Motor neuron (in vitro differentiated cells): ENCODE measurements at regions of chr2 and their contacts with region 1.

Region 1: DNA sequence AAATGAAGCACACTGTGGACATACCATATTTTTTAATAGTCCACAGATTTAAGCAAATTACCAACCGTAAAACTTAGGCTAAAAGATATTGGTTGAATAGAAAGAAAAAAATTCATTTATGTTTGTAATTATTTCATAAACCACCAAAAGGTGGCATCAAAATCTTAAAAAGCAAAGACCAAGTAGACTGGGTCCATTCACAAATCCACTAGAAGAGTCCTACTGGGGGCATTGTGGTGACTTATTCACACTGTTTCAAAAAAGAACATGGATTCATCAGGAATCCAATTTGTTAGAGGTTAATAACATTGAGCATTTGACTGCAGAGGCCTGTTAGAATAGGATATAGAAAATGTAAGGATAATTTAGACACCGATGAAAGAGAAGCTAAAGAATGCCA is 194.9 kb upstream of the KYNU start:
- ATAC-seq: no peak
- H3K4me3 ChIP-seq: no peak overlapping the region
- H3K27ac ChIP-seq: no peak overlapping the region
- H3K4me1 ChIP-seq: no peaks in the 10 kb centered on the region

Region 2: DNA sequence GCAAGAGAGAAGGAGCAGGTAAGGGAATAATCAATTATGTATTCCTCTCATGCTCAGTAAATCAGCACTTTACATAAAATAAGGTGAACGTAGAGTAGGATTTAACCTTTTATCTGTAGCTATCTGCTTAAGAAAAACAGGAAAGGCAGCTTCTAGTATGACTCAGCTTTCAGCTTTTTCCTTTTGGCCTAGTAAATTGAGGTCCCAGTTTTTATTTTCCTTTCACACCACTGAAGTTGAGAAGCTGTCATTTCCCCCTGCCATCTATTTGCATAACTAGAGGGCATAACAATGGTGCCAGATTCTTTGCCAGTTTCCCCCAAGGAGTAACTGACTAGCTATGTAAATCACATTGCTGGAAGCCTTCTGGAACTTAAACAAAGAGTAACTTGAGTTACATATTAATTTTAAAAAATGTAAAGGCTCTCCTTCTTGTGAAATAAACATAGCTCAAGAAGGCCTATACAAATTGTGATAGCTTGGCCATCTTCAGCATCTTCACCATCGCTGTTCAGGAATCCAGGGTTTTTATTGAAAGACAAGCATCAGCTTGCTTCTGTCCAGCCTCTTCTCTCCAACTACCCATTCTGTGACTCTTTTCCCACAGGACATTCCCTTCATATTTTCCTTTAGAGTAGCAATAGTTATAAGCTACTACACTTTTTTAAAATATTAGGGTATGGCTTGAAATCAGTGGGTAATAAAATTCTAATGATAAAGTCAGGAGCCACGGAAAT is 291.9 kb after region 1 on chr2:
- in situ Hi-C with region 1: loop called in 3 of 9 experiments (anchors 25 kb)
- ATAC-seq: peak in 4 of 8 experiments; percentile 8 to 62 (median 39)
- H3K4me3 ChIP-seq: no peak overlapping the region
- H3K27ac ChIP-seq: no peak overlapping the region
- H3K4me1 ChIP-seq: peaks cover 3 to 10% of the 10 kb centered on the region in 2 donors

Region 3: DNA sequence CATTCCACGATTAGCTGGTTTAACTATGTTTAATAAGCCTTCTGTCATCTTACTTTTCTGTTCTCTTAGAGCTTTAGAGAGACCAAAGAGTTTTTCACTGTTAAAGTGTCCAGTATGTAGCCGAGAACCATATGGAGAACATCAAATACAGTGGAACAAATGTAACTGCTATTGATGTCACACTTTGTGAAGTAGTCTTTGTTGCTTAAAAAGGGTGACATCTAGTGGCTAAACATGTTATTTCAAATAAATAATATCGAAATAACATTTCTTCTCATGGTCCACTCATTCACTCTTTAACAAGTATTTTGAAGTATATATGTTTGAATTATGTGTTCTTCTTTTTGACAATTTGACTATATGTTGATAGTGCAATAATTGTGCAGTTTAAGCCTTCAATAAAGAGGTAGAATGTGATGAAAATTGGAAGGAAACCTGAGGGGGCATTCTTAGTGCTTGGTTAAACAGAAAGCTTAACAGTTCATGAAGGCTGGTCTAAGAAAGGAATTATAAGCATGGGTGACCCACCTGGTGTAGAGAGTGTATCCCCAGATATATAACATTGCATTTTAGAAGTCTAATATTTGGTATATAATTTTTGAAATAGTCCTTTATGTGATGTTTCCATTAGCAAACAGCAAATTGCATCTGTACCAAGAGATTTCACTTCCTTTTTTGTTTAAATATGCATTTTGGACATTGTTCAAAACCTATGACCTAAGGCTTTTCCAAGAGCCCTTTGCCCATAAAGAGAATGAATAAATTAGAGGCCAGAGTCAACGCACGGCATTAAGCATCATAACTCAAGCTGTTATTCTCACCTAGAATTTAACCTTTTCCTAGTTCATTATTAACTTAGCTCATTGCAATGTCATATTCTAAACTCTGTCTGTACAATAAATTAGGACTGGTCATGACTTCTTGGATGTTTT is 307.0 kb after region 1 on chr2:
- in situ Hi-C with region 1: loop called in 2 of 9 experiments (anchors 25 kb)
- ATAC-seq: peak in 5 of 8 experiments; percentile 37 to 66 (median 52)
- H3K4me3 ChIP-seq: no peak overlapping the region
- H3K27ac ChIP-seq: no peak overlapping the region
- H3K4me1 ChIP-seq: peaks cover 0 to 7% of the 10 kb centered on the region in 2 donors